Activated CD4-positive, alpha-beta T cell treated with anti-CD3 and anti-CD28 coated beads, Interleukin-2, amount 10 ng/mL, durations not matched to agents 24 days and 14 days (primary cell): ENCODE measurements at regions of chr22 and their contacts with region 1.

Region 1: GRCh38 chr22:23838681-23839468 is at the start of gene DERL3:
- DNase-seq: peak; percentile 99
- H3K4me3 Mint-ChIP-seq: peak within 1 kb of the TSS; percentile 97
- H3K27ac Mint-ChIP-seq: peak within 1 kb of the TSS; percentile 96
- H3K4me1 Mint-ChIP-seq: peaks cover 25% of the 10 kb centered on the region
- H3K27me3 Mint-ChIP-seq: peaks cover 11% of the 10 kb centered on the region
- total RNA-seq, gene DERL3: 13.4 and 14.8 TPM in 2 replicates

Region 2: GRCh38 chr22:23716811-23717801 is 121.8 kb before region 1 on chr22:
- intact Hi-C with region 1: loop called (anchors 10 kb)
- DNase-seq: peak; percentile 96
- H3K4me3 Mint-ChIP-seq: peak overlapping the region; percentile 80
- H3K27ac Mint-ChIP-seq: peak overlapping the region; percentile 87
- H3K4me1 Mint-ChIP-seq: peaks cover 14% of the 10 kb centered on the region
- H3K27me3 Mint-ChIP-seq: no peaks in the 10 kb centered on the region

Region 3: GRCh38 chr22:23767673-23768548 is 71.0 kb before region 1 on chr22 and contains the start of gene CHCHD10:
- intact Hi-C with region 1: loop called (anchors 2 kb)
- DNase-seq: peak; percentile 95
- H3K4me3 Mint-ChIP-seq: peak within 1 kb of the TSS; percentile 87
- H3K27ac Mint-ChIP-seq: peak within 1 kb of the TSS; percentile 79
- H3K4me1 Mint-ChIP-seq: peaks cover 34% of the 10 kb centered on the region
- H3K27me3 Mint-ChIP-seq: peaks cover 2% of the 10 kb centered on the region
- total RNA-seq, gene CHCHD10: 122 and 126 TPM in 2 replicates

Region 4: GRCh38 chr22:24265734-24266133 is 426.9 kb after region 1 on chr22:
- intact Hi-C with region 1: no loop called
- DNase-seq: no peak
- H3K4me3 Mint-ChIP-seq: no peak overlapping the region
- H3K27ac Mint-ChIP-seq: no peak overlapping the region
- H3K4me1 Mint-ChIP-seq: peaks cover 7% of the 10 kb centered on the region
- H3K27me3 Mint-ChIP-seq: no peaks in the 10 kb centered on the region